ENCODE measurements at regions of chrX and their contacts with region 1.

Region 1: GRCh38 chrX:136065044-136065671 is 79.9 kb downstream of the SLC9A6 start:
- DNase-seq: peak in 13 of 14 experiments; percentile 2 to 68 (median 32)
- ATAC-seq: peak; percentile 93
- H3K4me3 ChIP-seq: no peak overlapping the region
- H3K4me3 Mint-ChIP-seq: peak overlapping the region; percentile 36
- H3K27ac ChIP-seq: peak overlapping the region; percentile 46 to 52
- H3K27ac Mint-ChIP-seq: peak overlapping the region; percentile 90
- H3K4me1 ChIP-seq: peaks cover 20% of the 10 kb centered on the region
- H3K4me1 Mint-ChIP-seq: peaks cover 34% of the 10 kb centered on the region
- H3K27me3 ChIP-seq: no peaks in the 10 kb centered on the region
- H3K27me3 Mint-ChIP-seq: no peaks in the 10 kb centered on the region
- CTCF ChIP-seq: no peak

Region 2: GRCh38 chrX:136147315-136147901 is 82.2 kb after region 1 on chrX and contains the start of gene FHL1:
- CTCF ChIA-PET with region 1: no interaction called
- POLR2A ChIA-PET with region 1: interaction called, 7 read pairs
- intact Hi-C with region 1: loop called in 1 of 2 experiments (anchors 5 kb)
- DNase-seq: peak; percentile 18 to 78 (median 51)
- ATAC-seq: peak; percentile 72
- H3K4me3 ChIP-seq: peak within 1 kb of the TSS; percentile 69
- H3K4me3 Mint-ChIP-seq: peak within 1 kb of the TSS; percentile 90
- H3K27ac ChIP-seq: peak within 1 kb of the TSS in 1 of 2 donors; percentile 36
- H3K27ac Mint-ChIP-seq: peak within 1 kb of the TSS; percentile 90
- H3K4me1 ChIP-seq: peaks cover 23% of the 10 kb centered on the region
- H3K4me1 Mint-ChIP-seq: peaks cover 52% of the 10 kb centered on the region
- H3K27me3 ChIP-seq: no peaks in the 10 kb centered on the region
- H3K27me3 Mint-ChIP-seq: no peaks in the 10 kb centered on the region
- CTCF ChIP-seq: no peak
- total RNA-seq, gene FHL1: 27.2 to 28.4 TPM